ENCODE measurements at regions of chr10 and their contacts with region 1.

Region 1: GRCh38 chr10:17257466-17258321 is 29.7 kb downstream of the VIM start:
- DNase-seq: peak; percentile 63
- ATAC-seq: peak; percentile 79
- H3K4me3 ChIP-seq: peak overlapping the region; percentile 35; the same call in 1 of the 2 replicates
- H3K27ac ChIP-seq: no peak overlapping the region
- H3K4me1 ChIP-seq: no peaks in the 10 kb centered on the region
- H3K27me3 ChIP-seq: no peaks in the 10 kb centered on the region
- CTCF ChIP-seq: peak; percentile 66

Region 2: GRCh38 chr10:16828114-16828568 is 429.6 kb before region 1 on chr10:
- CTCF ChIA-PET with region 1: no interaction called
- POLR2A ChIA-PET with region 1: no interaction called
- intact Hi-C with region 1: loop called (anchors 2 kb)
- DNase-seq: peak; percentile 74
- ATAC-seq: peak; percentile 68
- H3K4me3 ChIP-seq: no peak overlapping the region
- H3K27ac ChIP-seq: peak overlapping the region; percentile 57
- H3K4me1 ChIP-seq: peaks cover 12% of the 10 kb centered on the region; the same call in 1 of the 2 replicates
- H3K27me3 ChIP-seq: no peaks in the 10 kb centered on the region
- CTCF ChIP-seq: peak; percentile 49; the same call in 1 of the 2 replicates

Region 3: DNA sequence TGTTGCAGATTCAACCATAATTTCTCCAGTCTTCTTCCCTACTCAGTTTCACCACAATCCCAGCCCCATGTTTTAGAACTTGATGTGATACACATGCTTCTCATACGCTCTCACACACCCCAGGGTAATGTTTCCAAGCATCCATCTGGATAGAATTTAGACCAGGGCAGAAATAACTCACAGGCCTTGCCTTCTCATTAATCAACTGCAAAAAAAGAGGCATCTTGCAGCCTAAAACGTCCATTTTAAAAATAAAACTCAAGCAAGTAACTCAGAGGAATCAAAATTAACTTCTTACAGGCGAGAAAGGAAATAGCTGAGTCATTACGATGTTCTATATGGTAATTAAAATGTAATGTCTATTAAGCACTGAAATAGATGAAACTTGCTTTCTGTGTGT is 313.3 kb before region 1 on chr10:
- CTCF ChIA-PET with region 1: no interaction called
- POLR2A ChIA-PET with region 1: no interaction called
- intact Hi-C with region 1: loop called (anchors 5 kb)
- DNase-seq: no peak
- ATAC-seq: no peak
- H3K4me3 ChIP-seq: no peak overlapping the region
- H3K27ac ChIP-seq: no peak overlapping the region
- H3K4me1 ChIP-seq: no peaks in the 10 kb centered on the region
- H3K27me3 ChIP-seq: no peaks in the 10 kb centered on the region
- CTCF ChIP-seq: no peak

Region 4: DNA sequence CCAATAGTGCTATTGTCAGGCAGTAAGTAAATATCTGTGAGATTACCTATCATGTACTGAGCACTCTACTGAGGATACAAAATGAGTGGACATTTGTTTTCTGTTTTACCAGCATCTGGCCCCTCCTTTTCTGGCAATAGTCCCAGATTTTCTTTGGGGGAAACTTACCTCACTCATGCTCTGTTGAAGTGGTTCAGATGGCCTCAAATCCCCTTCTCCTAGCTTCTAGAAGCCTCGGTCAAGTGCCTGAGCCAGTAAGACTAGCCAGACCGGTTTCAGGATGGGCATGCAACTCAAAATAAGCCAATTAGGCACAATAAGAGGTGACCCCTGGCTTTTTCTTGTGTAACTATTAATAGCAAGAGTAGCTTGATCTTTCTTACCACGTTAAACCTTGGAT is 75.9 kb before region 1 on chr10:
- CTCF ChIA-PET with region 1: no interaction called
- POLR2A ChIA-PET with region 1: interaction called, 14 read pairs
- intact Hi-C with region 1: no loop called
- DNase-seq: peak; percentile 25
- ATAC-seq: no peak
- H3K4me3 ChIP-seq: no peak overlapping the region
- H3K27ac ChIP-seq: no peak overlapping the region
- H3K4me1 ChIP-seq: no peaks in the 10 kb centered on the region
- H3K27me3 ChIP-seq: no peaks in the 10 kb centered on the region
- CTCF ChIP-seq: no peak

Region 5: DNA sequence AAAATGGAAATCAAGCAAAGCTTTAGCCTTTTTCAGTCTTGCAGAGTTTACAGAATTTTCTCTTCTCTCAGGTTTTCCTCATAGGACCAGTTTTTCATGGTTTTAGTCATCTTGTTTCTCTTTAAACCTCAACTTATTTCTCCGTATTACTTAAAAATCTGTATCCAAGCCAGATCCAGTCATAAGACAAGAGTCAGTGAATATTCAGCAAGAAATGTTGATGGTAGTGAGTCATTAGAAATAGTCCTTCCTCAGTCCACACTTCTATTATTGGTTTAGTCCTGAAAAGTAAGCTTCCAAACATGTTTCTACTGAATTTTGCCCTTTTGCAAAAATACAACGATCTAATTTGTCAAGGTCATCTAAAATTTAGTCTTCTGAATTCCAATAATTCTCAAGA is 77.4 kb after region 1 on chr10:
- CTCF ChIA-PET with region 1: no interaction called
- POLR2A ChIA-PET with region 1: no interaction called
- intact Hi-C with region 1: no loop called
- DNase-seq: peak; percentile 56
- ATAC-seq: peak; percentile 50; the same call in 1 of the 2 replicates
- H3K4me3 ChIP-seq: peak overlapping the region; percentile 32; the same call in 1 of the 2 replicates
- H3K27ac ChIP-seq: no peak overlapping the region
- H3K4me1 ChIP-seq: peaks cover 9% of the 10 kb centered on the region; the same call in 1 of the 2 replicates
- H3K27me3 ChIP-seq: no peaks in the 10 kb centered on the region
- CTCF ChIP-seq: no peak

Measured in PC-3 (cell line).